ENCODE measurements at regions of chr17 and their contacts with region 1.

Region 1: DNA sequence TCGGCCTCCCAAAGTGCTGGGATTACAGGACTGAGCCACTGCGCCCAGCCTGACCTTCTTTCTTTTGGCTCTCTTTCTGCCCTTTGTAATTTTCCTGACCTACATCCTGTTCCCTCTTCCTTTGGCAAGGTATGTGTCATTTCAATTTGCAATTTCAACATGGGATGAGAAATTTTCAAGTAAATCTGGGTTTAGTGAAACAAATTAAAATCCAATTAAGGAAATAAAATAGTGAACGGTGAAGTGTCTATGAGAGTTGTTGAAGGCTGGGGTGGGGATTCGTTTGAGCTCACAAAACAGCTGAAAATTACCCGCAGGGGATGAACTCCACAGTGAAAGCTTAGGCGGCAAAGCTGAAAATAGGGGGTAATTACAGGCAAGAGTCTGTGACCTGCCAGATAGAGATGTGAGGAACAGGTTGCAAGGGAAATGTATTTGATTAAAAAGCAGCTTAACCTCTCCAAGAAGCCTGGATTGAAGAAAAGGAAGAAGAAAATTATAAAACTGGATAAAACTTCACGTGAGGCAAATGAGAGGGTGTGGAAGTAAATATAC is 277.7 kb downstream of the UTP18 start:
- DNase-seq: no peak
- ATAC-seq: no peak
- H3K4me3 ChIP-seq: no peak overlapping the region
- H3K27ac ChIP-seq: no peak overlapping the region
- H3K4me1 ChIP-seq: no peaks in the 10 kb centered on the region
- H3K27me3 ChIP-seq: no peaks in the 10 kb centered on the region
- CTCF ChIP-seq: no peak
- POLR2A ChIP-seq: no peak

Region 2: GRCh38 chr17:51298508-51299371 is 239.3 kb before region 1 on chr17:
- intact Hi-C with region 1: loop called in 4 of 10 experiments (anchors 5 to 10 kb)
- DNase-seq: no peak
- ATAC-seq: no peak
- H3K4me3 ChIP-seq: no peak overlapping the region
- H3K27ac ChIP-seq: no peak overlapping the region
- H3K4me1 ChIP-seq: no peaks in the 10 kb centered on the region
- H3K27me3 ChIP-seq: no peaks in the 10 kb centered on the region
- CTCF ChIP-seq: peak; percentile 28 to 69 (median 56)
- POLR2A ChIP-seq: no peak

Region 3: GRCh38 chr17:51371732-51372151 is 166.3 kb before region 1 on chr17:
- intact Hi-C with region 1: loop called in 2 of 10 experiments (anchors 5 to 10 kb)
- DNase-seq: no peak
- ATAC-seq: peak in 3 of 4 donors; percentile 72 to 83 (median 77)
- H3K4me3 ChIP-seq: no peak overlapping the region
- H3K27ac ChIP-seq: no peak overlapping the region
- H3K4me1 ChIP-seq: peaks cover 0 to 12% (median 0%) of the 10 kb centered on the region in 12 donors
- H3K27me3 ChIP-seq: peaks cover 0 to 11% (median 3%) of the 10 kb centered on the region in 9 donors
- CTCF ChIP-seq: peak; percentile 9 to 61 (median 40)
- POLR2A ChIP-seq: no peak

Measured in heart left ventricle (tissue), 16 donors.